Astrocyte of the cerebellum (primary cell): ENCODE measurements at regions of chr6 and their contacts with region 1.

Region 1: DNA sequence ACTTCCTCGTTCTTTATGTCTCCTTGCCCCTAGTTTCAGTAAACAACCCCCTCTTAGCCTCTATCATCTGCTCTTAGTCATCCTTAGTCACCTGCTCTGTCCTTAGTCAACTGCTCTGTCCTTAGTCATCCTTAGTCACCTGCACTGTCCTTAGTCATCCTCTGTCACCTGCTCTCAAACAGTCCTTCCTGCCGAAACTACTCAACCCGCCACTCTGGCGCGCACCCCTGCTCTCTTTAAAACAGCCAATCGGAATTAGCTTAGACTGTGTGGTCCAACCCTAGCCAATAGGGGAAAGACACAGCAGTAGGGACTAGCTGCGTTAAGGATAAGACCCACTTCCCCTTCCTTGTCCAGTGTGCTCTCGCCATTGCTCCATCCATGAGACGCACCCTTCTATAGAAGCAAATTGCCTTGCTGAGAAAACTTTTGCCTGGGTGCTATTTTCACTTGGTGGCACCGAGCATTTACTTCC is 73.9 kb downstream of the BACH2 start:
- DNase-seq: no peak
- H3K4me3 ChIP-seq: no peak overlapping the region
- CTCF ChIP-seq: no peak

Region 2: DNA sequence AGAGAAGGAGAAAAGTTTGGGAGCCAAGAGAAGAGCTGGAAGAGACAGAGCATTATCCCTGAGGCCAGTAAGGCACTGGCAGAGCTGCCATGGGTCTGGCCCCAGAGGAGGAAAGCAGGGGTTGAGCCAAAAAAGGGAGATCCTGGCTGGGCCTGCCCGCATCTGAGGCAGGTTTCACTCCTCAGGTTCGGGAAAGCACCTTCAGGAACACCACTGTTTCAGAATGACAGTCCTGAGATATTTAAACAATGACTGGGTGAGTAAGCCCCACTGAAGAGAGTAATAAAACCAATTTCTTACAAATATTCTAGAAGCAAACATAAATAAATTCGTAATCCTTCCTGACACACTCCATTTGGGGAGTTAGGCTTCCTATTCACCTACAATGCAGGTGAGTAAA is 78.4 kb before region 1 on chr6:
- in situ Hi-C with region 1: no loop called
- DNase-seq: no peak
- H3K4me3 ChIP-seq: no peak overlapping the region
- CTCF ChIP-seq: no peak

Region 3: DNA sequence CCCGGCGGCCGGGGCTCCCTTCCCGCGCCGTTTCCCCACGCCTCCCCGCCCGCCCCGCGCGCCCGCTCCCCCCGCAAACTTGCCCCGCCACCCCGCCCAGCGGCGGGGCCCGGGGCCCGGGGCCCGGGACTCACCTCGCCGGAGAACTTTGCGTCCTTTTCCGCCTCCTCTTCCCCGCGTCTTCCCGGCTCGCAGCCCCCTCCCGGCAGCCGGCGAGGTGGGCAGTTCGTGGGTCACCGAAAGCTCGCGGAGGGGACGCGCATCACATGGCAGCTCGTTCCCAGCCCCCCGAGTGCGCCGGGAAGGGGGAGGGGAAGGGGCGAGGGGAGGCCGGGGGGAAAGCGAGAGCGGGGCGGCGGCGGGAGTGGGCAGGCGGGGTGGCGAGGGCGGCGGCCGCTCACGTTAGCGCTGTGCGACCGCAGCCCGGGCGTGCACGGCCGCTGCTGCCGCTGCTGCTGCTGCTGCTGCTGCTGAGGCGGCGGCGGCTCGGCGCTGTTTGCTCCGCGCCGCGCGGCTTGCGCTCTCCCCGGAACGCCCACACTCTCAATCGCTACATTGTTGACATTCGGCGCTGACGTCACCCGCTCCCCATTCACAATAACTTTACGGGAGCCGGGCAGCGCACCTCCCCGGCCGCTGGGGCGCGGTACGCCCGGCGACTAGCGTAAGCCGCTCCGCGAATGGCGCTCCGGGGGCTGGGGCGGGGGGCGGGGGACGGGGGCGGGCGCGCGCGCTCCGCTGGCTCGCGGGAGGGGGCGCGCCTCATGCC is 73.8 kb after region 1 on chr6 and contains the start of gene BACH2:
- in situ Hi-C with region 1: loop called (anchors 5 kb)
- DNase-seq: peak; percentile 88
- H3K4me3 ChIP-seq: peak within 1 kb of the TSS; percentile 64
- CTCF ChIP-seq: peak; percentile 15

Region 4: DNA sequence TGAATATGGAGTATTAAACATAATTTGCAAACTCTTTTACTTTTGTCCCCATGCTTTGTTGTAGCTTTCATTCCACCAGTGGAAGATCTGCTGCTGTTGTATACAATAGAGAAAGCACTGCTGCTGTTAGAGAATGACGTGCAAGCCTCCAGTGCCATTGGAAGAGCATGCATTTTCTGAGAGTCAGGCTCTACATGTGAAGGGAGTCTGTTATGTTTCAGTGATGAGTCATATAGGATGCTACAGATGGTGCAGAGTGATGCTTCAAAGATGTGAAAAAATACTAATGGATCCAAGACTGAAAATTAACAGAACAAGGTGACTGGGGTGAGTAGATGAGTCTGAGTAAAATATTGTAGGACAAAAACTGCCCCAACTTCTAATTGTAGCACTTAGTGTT is 96.3 kb after region 1 on chr6:
- in situ Hi-C with region 1: no loop called
- DNase-seq: no peak
- H3K4me3 ChIP-seq: no peak overlapping the region
- CTCF ChIP-seq: no peak